Left lung (tissue), 14 donors: ENCODE measurements at regions of chr1 and their contacts with region 1.

Region 1: GRCh38 chr1:78114034-78114956 is 68.5 kb downstream of the GIPC2 start:
- DNase-seq: peak in 2 of 4 donors; percentile 63 to 80
- ATAC-seq: peak; percentile 98
- H3K4me3 ChIP-seq: no peak overlapping the region
- H3K27ac ChIP-seq: no peak overlapping the region
- H3K4me1 ChIP-seq: no peaks in the 10 kb centered on the region
- H3K27me3 ChIP-seq: no peaks in the 10 kb centered on the region
- CTCF ChIP-seq: peak; percentile 55 to 84

Region 2: GRCh38 chr1:77978969-77979876 is 135.1 kb before region 1 on chr1 and contains the start of gene FUBP1:
- intact Hi-C with region 1: loop called in 1 of 2 experiments (anchors 10 kb)
- DNase-seq: peak; percentile 95 to 99 (median 98)
- ATAC-seq: peak; percentile 91
- H3K4me3 ChIP-seq: peak within 1 kb of the TSS; percentile 60 to 68
- H3K27ac ChIP-seq: peak within 1 kb of the TSS; percentile 94 to 97
- H3K4me1 ChIP-seq: peaks cover 16 to 50% of the 10 kb centered on the region in 2 donors
- H3K27me3 ChIP-seq: no peaks in the 10 kb centered on the region
- CTCF ChIP-seq: peak; percentile 59 to 82
- polyA plus RNA-seq, gene FUBP1: 358 to 412 (median 365) TPM

Region 3: GRCh38 chr1:78070758-78071157 is 43.5 kb before region 1 on chr1:
- intact Hi-C with region 1: no loop called
- DNase-seq: no peak
- ATAC-seq: peak; percentile 60
- H3K4me3 ChIP-seq: no peak overlapping the region
- H3K27ac ChIP-seq: no peak overlapping the region
- H3K4me1 ChIP-seq: no peaks in the 10 kb centered on the region
- H3K27me3 ChIP-seq: no peaks in the 10 kb centered on the region
- CTCF ChIP-seq: no peak

Region 4: GRCh38 chr1:78156805-78157521 is 42.7 kb after region 1 on chr1:
- intact Hi-C with region 1: no loop called
- DNase-seq: peak in 2 of 4 donors; percentile 25 to 68
- ATAC-seq: no peak
- H3K4me3 ChIP-seq: no peak overlapping the region
- H3K27ac ChIP-seq: no peak overlapping the region
- H3K4me1 ChIP-seq: no peaks in the 10 kb centered on the region
- H3K27me3 ChIP-seq: no peaks in the 10 kb centered on the region
- CTCF ChIP-seq: no peak